ENCODE measurements at regions of chr6 and their contacts with region 1.

Region 1: DNA sequence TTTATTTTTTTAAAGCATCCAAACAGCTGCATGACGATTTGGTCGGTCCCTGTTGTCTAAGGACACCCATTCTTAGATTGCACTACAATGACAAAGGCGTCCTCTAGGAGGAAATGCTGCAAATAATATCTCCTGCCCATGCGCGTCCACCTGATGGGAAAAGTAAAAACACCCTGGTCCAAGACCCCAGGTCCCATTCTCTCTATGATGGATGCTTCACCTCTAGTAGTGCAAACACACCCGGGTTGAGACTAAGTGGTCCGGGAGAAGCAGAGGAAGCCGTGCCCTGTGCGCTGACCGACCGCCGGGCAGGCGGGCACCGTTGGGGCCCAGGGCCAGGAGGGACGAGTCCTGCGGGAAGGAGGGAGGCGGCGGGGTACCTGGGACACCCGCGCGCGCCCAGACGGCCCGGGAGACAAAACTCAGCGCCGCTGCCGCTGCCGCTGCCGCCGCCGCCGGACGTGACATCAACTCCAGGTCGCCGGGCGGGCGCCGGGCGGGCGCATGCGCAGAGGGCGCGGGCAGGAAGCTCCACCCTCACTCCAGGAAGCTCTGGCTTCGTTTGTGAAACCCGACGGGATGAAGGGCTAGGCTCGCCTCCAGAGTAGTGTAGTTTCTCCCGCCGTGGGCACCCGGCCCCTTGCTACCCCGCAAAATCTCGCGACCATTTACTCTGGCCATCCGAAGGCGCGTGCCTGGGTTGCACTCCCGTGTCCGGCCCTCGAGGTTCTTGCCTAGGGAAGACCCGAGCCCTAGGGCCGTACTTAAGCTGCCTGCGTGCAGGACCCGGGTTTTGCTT is at the start of gene TBC1D7:
- DNase-seq: peak; percentile 95
- ATAC-seq: peak; percentile 85
- H3K4me3 Mint-ChIP-seq: peak within 1 kb of the TSS; percentile 95
- H3K27ac Mint-ChIP-seq: peak within 1 kb of the TSS; percentile 98
- H3K4me1 Mint-ChIP-seq: peaks cover 36% of the 10 kb centered on the region
- H3K27me3 Mint-ChIP-seq: no peaks in the 10 kb centered on the region
- CTCF ChIP-seq: no peak
- total RNA-seq, gene TBC1D7: 17.3 and 18.5 TPM in 2 replicates

Region 2: DNA sequence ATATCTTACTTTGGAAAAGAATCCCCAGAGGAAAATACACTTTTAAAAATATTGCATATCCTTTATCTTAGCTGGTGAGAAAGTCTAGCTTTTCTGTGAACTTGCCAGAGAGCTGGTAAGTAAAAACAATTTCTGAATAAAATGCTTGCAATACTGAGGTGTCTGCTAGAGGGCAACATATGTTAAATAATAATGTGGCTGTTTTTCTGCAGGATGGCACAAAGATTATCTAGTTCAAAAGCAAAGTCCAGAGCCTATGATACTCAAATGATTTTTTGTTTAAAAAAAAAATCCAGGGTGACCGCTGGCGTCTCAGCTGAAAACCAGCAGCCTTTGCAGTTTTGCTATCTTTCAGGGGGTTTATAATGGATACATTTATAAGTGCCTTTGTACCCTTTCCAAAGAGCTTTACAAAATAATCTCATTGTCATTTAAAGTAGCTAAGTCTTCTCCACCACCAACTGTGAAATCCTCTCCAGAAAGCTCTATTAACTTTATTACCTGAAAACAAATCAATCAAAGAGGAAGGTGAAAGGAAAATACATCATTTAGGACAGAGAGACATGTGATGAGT is 416.8 kb before region 1 on chr6:
- CTCF ChIA-PET with region 1: interaction called, 76 read pairs
- POLR2A ChIA-PET with region 1: interaction called, 6 read pairs
- intact Hi-C with region 1: loop called (anchors 1 kb)
- DNase-seq: no peak
- ATAC-seq: no peak
- H3K4me3 Mint-ChIP-seq: no peak overlapping the region
- H3K27ac Mint-ChIP-seq: no peak overlapping the region
- H3K4me1 Mint-ChIP-seq: peaks cover 5% of the 10 kb centered on the region
- H3K27me3 Mint-ChIP-seq: no peaks in the 10 kb centered on the region
- CTCF ChIP-seq: no peak

Region 3: DNA sequence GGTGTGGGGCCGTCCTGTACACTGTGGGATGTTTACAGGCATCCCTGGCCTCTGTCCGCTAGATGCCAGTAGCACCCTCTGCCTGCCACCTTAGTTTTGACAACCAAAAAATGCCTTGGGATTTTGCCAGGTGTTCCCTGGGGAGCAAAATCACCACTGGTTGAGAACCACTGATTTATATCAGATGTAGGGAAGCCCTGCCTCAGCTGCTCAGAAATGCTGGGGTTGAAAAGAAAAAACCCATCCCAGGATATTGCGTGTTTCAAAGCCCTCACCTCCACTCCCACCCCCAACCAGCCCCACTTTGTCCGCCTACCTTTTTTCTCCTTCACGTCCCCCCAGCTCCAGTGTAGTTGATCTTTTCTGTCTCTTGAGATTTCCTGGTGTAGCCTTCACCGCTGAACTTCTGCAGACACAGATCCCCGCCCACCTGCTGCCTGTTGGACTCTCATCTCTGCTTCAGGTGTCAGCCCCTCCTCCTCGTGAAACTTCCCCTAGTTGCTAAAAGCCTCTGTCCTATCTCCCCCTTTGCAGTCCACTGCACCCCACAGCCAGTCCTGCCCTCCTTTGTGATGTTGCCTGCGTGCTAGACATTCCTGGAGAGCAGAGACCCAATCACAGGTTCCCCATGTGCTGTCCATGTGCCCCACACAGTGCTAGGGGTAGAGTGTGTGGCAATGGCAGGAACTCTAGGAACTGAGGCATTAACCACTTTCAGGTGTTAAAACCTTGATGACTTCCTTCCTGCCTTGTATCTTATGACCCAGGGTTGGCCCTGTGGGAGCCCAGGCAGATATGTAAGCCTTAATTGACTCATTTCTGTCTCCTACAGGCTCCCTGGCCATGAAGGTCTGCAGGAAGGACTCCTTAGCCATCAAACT is 98.8 kb before region 1 on chr6:
- CTCF ChIA-PET with region 1: interaction called, 3 read pairs
- POLR2A ChIA-PET with region 1: interaction called, 4 read pairs
- intact Hi-C with region 1: loop called (anchors 1 kb)
- DNase-seq: peak; percentile 28
- ATAC-seq: peak; percentile 84
- H3K4me3 Mint-ChIP-seq: peak overlapping the region; percentile 7
- H3K27ac Mint-ChIP-seq: peak overlapping the region; percentile 27
- H3K4me1 Mint-ChIP-seq: peaks cover 30% of the 10 kb centered on the region
- H3K27me3 Mint-ChIP-seq: peaks cover 7% of the 10 kb centered on the region
- CTCF ChIP-seq: no peak

Region 4: DNA sequence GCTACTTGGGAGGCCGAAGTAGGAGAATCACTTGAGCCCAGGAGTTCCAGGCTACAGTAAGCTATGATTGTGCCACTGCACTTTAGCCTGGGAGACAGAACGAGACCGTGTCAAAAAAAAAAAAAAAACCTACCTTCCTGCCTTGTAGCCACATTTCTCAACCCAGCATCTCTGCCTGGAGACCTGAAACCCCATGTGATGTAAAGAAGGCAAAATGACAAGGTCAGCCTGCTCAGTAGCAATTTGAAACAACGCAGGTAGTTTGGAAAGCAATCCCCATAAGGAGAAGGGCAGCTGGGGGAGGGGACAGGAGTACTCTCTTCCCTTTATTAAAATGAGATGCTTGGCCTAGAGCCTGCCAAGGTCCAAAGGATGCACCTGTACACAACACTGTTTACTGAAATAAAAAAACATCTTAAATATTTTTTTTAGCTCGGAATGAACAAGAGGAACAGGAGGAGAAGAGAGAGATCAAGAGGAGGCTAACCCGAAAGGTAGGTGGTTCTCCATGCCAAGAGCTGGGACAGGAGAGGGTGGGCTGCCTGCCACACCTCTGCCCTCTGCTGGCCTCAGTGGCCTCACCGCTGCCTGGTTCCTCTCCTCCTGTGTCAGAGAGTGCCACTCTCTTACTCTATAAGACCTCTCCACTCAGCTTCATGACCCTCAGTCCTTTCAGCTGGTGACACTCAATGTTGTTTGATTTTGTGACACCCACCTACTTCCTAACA is 50.3 kb before region 1 on chr6:
- CTCF ChIA-PET with region 1: interaction called, 10 read pairs
- POLR2A ChIA-PET with region 1: interaction called, 55 read pairs
- intact Hi-C with region 1: no loop called
- DNase-seq: no peak
- ATAC-seq: peak; percentile 26
- H3K4me3 Mint-ChIP-seq: peak overlapping the region; percentile 58
- H3K27ac Mint-ChIP-seq: peak overlapping the region; percentile 77
- H3K4me1 Mint-ChIP-seq: peaks cover 75% of the 10 kb centered on the region
- H3K27me3 Mint-ChIP-seq: no peaks in the 10 kb centered on the region
- CTCF ChIP-seq: no peak

Region 5: GRCh38 chr6:13302751-13303667 is 25.3 kb before region 1 on chr6:
- CTCF ChIA-PET with region 1: interaction called, 15 read pairs
- POLR2A ChIA-PET with region 1: interaction called, 80 read pairs
- intact Hi-C with region 1: loop called (anchors 1 kb)
- DNase-seq: no peak
- ATAC-seq: peak; percentile 55
- H3K4me3 Mint-ChIP-seq: peak overlapping the region; percentile 63
- H3K27ac Mint-ChIP-seq: peak overlapping the region; percentile 92
- H3K4me1 Mint-ChIP-seq: peaks cover 79% of the 10 kb centered on the region
- H3K27me3 Mint-ChIP-seq: no peaks in the 10 kb centered on the region
- CTCF ChIP-seq: no peak

Region 6: DNA sequence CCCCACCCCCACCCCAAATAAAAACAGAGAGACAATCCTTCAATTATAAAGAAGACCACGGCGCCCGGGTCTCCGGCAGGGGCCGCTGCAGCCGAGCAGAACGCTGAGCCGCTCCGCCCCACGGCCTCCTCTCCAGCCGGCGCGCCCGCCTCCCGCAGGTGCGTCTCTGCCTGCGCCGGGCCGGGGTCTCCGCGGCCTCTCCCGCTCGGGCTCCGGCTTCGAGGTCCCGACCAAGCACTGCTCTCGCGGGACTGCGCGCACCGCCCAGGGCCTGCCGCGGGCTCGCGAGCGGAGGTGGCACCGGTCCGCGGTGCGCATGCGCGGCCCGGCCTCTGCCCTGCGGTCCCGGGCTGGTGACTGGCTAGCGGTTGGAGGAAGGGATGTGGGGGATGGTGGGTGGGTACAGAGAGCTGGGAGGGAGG is 245.9 kb after region 1 on chr6:
- CTCF ChIA-PET with region 1: interaction called, 10 read pairs
- POLR2A ChIA-PET with region 1: interaction called, 24 read pairs
- intact Hi-C with region 1: loop called (anchors 2 kb)
- DNase-seq: peak; percentile 89
- ATAC-seq: peak; percentile 84
- H3K4me3 Mint-ChIP-seq: peak overlapping the region; percentile 90
- H3K27ac Mint-ChIP-seq: peak overlapping the region; percentile 94
- H3K4me1 Mint-ChIP-seq: peaks cover 23% of the 10 kb centered on the region
- H3K27me3 Mint-ChIP-seq: no peaks in the 10 kb centered on the region
- CTCF ChIP-seq: no peak